Endothelial cell of umbilical vein (primary cell): ENCODE measurements at regions of chr14 and their contacts with region 1.

Region 1: DNA sequence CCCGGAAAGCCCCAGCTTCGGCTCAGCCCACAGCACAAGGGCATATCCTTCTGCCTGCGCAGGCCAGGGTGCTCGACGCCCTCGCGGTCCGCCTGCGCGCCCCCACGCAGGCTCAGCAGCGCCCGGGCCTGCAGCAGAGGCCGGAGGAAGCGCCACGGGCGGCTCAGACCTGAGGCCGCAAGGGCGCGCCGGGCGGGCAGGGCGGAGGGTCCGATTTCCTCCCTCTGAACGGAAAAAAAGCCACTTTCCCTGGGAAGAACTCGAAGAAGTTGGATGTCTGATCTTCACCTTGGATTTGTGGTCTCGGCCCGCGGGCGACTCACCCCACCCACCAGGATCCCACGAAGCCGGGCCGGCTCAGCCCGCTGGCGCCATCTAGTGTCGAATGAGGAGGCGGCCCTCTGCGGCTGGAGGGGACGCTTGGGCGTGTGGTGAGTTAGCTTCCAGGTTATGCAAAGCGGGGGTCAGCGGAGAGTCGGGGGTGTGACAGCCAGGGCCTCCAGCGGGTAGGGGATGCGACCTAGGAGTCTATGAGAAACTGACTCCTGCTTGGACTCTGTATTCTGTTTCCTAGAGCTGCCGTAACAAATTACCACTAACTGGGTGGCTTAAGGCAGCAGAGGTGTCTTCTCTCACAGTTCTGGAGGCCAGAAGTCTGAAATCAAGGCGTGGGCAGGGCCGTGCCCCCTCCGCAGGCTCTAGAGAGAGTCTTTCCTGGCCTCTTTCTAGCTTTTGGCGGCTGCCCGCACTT is 40.0 kb upstream of the SRSF5 start:
- DNase-seq: peak; percentile 75
- H3K4me3 ChIP-seq: peak overlapping the region; percentile 2 to 40 (median 18)
- H3K27ac ChIP-seq: peak overlapping the region; percentile 20
- H3K4me1 ChIP-seq: peaks cover 5% of the 10 kb centered on the region
- H3K27me3 ChIP-seq: no peaks in the 10 kb centered on the region
- CTCF ChIP-seq: peak; percentile 98 to 99
- POLR2A ChIP-seq: no peak

Region 2: GRCh38 chr14:69580009-69580577 is 146.8 kb before region 1 on chr14:
- CTCF ChIA-PET with region 1: interaction called, 124 read pairs
- POLR2A ChIA-PET with region 1: no interaction called
- dilution Hi-C with region 1: no loop called
- intact Hi-C with region 1: loop called (anchors 1 kb)
- DNase-seq: peak; percentile 36
- H3K4me3 ChIP-seq: no peak overlapping the region
- H3K27ac ChIP-seq: no peak overlapping the region
- H3K4me1 ChIP-seq: no peaks in the 10 kb centered on the region
- H3K27me3 ChIP-seq: peaks cover 15 to 27% of the 10 kb centered on the region in 2 experiments
- CTCF ChIP-seq: peak; percentile 44 to 62
- POLR2A ChIP-seq: no peak

Region 3: DNA sequence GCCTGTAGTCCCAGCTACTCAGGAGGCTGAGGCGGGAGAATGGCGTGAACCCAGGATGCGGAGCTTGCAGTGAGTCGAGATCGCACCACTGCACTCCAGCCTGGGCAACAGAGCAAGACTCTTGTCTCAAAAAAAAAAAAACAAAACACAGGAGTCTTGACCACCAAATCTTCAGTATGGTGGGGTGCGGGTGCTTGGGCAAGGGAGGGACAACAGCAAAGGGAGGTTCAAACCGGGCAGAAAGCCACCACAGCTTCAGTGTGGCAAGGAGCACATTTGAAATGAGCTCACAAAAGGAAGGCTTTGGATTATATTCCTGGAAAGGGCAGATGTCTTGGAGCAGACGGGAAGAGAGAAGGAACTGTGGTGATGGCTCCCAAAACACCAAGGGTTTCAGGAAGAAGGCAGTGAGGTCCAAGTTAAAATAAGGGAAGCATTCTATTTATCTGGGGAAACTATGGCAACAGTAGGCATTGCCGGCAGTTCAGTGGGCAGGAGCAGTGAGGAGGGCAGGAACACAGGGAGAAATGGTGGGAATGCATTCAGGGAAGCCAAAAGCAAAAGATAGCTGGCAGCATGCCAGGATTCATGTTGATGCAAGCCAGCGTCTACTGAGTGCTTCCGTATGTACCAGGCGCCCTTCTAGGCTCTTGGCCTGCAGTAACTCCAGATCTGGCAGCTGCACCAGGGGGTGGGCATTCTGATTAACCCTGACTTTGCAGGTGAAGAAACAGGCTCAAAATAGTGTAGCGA is 11.0 kb before region 1 on chr14:
- CTCF ChIA-PET with region 1: interaction called, 7 read pairs
- POLR2A ChIA-PET with region 1: no interaction called
- dilution Hi-C with region 1: no loop called
- intact Hi-C with region 1: loop called (anchors 1 kb)
- DNase-seq: peak; percentile 85
- H3K4me3 ChIP-seq: peak overlapping the region in 1 of 3 experiments; percentile 4
- H3K27ac ChIP-seq: peak overlapping the region; percentile 73
- H3K4me1 ChIP-seq: peaks cover 46% of the 10 kb centered on the region
- H3K27me3 ChIP-seq: no peaks in the 10 kb centered on the region
- CTCF ChIP-seq: no peak
- POLR2A ChIP-seq: no peak

Region 4: DNA sequence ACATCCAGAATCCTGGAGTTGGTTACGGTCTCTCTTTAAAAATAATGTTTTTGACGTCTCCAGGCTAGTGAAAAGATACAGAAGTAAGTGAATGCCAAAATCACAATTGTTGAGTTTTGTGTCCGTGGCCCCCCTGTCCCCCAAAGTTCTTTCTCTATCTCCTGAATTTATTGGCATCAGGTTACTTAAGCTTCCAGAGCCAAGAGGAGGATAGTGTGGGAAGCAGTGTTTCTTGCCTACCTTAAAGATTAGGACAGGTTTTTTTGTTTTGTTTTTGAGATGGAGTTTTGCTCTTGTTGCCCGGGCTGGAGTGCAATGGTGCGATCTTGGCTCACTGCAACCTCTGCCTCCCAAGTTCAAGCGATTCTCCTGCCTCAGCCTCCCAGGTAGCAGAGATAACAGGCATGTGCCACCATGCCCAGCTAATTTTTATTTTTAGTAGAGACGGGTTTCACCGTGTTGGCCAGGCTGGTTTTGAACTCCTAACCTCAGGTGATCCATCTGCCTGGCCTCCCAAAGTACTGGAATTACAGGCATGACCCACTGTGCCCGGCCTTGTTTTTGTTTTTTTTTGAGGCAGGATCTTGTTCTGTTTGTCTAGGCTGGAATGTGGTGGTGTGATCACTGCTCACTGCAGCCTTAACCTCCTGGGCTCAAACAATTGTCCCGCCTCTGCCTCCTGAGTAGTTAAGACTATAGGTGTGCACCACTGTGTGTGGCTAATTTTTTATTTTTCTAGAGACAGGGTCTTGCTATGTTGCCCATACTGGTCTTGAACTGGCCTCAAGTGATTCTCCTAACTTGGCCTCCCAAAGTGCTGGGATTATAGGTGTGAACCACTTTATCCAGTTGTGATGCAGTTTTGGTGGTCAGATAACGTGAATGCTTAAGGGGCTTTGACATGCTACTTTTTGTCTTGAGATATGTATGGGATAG is 45.4 kb after region 1 on chr14:
- CTCF ChIA-PET with region 1: interaction called, 23 read pairs
- POLR2A ChIA-PET with region 1: interaction called, 10 read pairs
- dilution Hi-C with region 1: no loop called
- intact Hi-C with region 1: no loop called
- DNase-seq: no peak
- H3K4me3 ChIP-seq: no peak overlapping the region
- H3K27ac ChIP-seq: no peak overlapping the region
- H3K4me1 ChIP-seq: peaks cover 21% of the 10 kb centered on the region
- H3K27me3 ChIP-seq: no peaks in the 10 kb centered on the region
- CTCF ChIP-seq: no peak
- POLR2A ChIP-seq: no peak

Region 5: DNA sequence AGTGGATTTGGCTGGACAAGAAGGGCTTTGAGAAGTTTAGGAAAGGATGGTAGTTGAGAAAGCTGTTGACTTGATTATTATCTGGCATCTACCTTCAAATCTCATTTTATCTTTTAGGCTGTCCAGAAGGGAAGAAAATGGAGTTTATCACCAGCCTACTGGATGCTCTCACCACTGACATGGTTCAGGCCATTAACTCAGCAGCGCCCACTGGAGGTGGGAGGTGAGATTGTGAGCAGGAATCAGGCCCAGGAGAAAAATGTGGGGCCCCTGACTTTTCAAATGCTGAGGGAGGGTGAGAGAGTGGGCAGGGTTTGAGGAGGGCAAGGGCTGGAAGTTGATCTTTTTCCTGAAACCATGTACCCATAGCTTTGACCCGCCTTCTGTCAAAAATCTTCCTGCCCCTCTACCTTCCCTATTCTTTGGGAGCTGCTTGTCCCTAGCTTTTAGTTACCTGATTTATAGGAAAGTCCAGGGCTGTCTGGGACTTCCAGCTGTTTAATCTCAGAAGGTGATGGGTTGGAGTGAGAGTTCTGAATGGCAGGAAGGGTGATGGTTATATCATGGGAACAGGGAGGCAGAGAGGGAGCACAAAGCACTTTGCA is 286.4 kb after region 1 on chr14:
- CTCF ChIA-PET with region 1: interaction called, 5 read pairs
- POLR2A ChIA-PET with region 1: no interaction called
- dilution Hi-C with region 1: no loop called
- intact Hi-C with region 1: loop called (anchors 5 kb)
- DNase-seq: peak; percentile 34
- H3K4me3 ChIP-seq: no peak overlapping the region
- H3K27ac ChIP-seq: no peak overlapping the region
- H3K4me1 ChIP-seq: no peaks in the 10 kb centered on the region
- H3K27me3 ChIP-seq: no peaks in the 10 kb centered on the region
- CTCF ChIP-seq: peak; percentile 78 to 80
- POLR2A ChIP-seq: no peak